ENCODE measurements at regions of chr9 and their contacts with region 1.

Region 1: DNA sequence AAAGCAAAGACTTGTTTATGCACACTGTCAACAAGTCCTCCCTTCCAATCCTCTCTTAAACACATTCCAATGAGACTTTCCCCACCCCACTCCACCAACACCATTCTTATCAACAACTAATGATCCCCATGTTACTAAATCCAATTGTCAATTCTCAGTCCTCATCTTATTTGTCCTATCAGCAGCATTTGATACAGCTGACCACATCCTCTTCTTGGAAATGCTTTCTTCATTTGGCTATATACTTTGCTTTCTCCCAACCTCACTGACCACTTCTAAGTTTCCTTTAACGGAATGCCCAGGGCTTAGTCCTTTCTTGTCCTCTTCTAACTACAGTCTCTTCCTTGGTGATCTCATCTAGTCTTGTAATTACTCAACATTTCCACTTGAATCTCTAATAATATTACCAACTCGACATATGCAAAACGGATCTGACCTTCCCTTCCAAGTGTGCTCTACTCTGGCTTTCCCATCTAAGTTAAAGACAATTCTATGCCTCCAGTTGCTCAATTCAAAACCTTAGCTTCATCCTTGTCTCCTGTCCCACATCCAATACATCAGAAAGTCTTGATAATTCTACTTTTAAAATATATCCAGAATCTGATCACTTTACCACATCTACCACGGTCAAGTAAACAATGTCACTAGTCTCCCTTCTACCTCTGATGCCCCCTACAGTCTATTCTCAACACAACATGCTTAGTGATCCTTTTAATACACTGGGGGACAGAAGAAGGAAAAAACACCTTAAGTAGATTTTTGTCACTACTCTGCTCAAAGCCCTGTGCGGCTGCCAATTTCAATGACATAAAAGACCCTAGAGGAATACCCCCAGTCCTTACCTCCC is 25.5 kb downstream of the AGTPBP1 start:
- DNase-seq: peak in 1 of 2 donors; percentile 36
- ATAC-seq: peak; percentile 30 to 61 (median 32)
- H3K4me3 ChIP-seq: no peak overlapping the region
- H3K4me3 Mint-ChIP-seq: peak overlapping the region; percentile 78
- H3K27ac ChIP-seq: peak overlapping the region; percentile 81
- H3K27ac Mint-ChIP-seq: peak overlapping the region; percentile 82 to 91
- H3K4me1 ChIP-seq: peaks cover 26% of the 10 kb centered on the region
- H3K4me1 Mint-ChIP-seq: peaks cover 72 to 75% of the 10 kb centered on the region in 2 donors
- H3K27me3 ChIP-seq: no peaks in the 10 kb centered on the region
- H3K27me3 Mint-ChIP-seq: no peaks in the 10 kb centered on the region
- CTCF ChIP-seq: peak; percentile 28

Region 2: GRCh38 chr9:85702726-85703289 is 13.4 kb before region 1 on chr9:
- intact Hi-C with region 1: loop called (anchors 2 kb)
- DNase-seq: no peak
- ATAC-seq: no peak
- H3K4me3 ChIP-seq: no peak overlapping the region
- H3K4me3 Mint-ChIP-seq: no peak overlapping the region
- H3K27ac ChIP-seq: no peak overlapping the region
- H3K27ac Mint-ChIP-seq: peak overlapping the region; percentile 9 to 30
- H3K4me1 ChIP-seq: peaks cover 3% of the 10 kb centered on the region
- H3K4me1 Mint-ChIP-seq: peaks cover 58 to 65% of the 10 kb centered on the region in 2 donors
- H3K27me3 ChIP-seq: no peaks in the 10 kb centered on the region
- H3K27me3 Mint-ChIP-seq: no peaks in the 10 kb centered on the region
- CTCF ChIP-seq: no peak

Region 3: DNA sequence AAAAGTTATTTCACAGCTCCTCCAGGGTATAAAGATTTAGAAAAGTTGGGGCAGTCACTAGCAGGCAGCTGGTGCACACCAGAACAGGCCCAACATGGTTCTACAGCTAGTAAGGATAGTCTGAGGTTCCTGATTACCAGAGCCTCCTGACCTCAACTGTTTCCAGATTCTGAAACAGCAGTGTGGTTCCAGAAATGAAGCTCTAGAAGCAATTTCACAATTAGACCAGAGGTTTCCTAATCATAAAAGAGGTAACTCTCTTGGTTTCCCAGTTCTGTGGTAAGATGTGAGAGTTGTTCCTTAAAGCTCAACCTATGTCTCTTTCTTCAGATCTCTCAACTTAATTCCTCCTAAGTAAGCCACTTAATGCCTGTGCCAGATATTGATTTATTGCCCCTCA is 13.6 kb after region 1 on chr9:
- intact Hi-C with region 1: loop called (anchors 1 kb)
- DNase-seq: no peak
- ATAC-seq: peak in 2 of 3 donors; percentile 37 to 53
- H3K4me3 ChIP-seq: no peak overlapping the region
- H3K4me3 Mint-ChIP-seq: no peak overlapping the region
- H3K27ac ChIP-seq: peak overlapping the region; percentile 4
- H3K27ac Mint-ChIP-seq: peak overlapping the region; percentile 58 to 78
- H3K4me1 ChIP-seq: peaks cover 25% of the 10 kb centered on the region
- H3K4me1 Mint-ChIP-seq: peaks cover 78 to 84% of the 10 kb centered on the region in 2 donors
- H3K27me3 ChIP-seq: no peaks in the 10 kb centered on the region
- H3K27me3 Mint-ChIP-seq: no peaks in the 10 kb centered on the region
- CTCF ChIP-seq: no peak

Region 4: DNA sequence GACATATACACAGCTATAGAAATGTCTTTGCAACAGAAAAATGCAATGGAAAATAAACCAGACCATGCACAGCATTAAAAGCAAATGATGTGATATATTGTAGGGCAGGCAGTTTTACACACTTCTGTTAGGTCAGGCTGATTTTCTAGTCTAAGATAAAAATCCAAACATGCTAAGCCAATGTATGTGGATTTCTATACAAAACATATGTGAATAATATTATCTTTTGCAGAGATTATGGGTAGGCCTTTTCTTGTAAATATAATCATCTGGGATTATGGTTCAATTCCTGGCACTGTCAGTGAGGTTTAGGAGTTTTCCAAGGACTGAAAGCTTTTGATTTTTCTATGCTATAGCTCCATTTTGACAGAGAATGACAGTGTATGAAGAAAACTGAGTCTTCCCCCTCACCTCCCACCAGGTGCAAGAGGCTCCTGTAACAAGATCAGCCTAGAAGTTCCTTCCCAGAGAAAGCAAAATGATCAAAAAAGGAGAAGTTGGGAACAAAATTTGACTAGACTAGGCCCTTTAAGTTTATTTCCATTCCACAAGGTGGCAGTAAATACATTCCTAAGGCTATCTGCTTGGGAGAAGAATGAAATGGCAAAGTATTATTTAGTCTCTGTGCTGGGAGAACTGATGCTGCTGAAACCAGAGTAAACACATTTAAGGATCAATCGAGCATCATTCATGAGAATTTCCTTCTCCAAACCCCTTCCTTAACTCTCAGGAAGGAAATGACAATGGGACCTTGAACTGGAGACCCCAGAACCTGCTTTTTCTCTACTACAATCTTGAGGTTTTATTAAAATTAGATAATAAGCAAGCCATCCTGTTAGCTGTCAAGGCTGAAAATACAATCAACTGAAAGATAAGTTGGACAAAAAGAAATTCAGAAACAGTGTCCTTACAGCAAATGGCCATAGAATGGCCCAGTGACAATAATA is 770.9 kb after region 1 on chr9:
- intact Hi-C with region 1: no loop called
- DNase-seq: peak in 1 of 2 donors; percentile 32
- ATAC-seq: no peak
- H3K4me3 ChIP-seq: no peak overlapping the region
- H3K4me3 Mint-ChIP-seq: no peak overlapping the region
- H3K27ac ChIP-seq: no peak overlapping the region
- H3K27ac Mint-ChIP-seq: no peak overlapping the region
- H3K4me1 ChIP-seq: no peaks in the 10 kb centered on the region
- H3K4me1 Mint-ChIP-seq: peaks cover 9 to 10% of the 10 kb centered on the region in 2 donors
- H3K27me3 ChIP-seq: no peaks in the 10 kb centered on the region
- H3K27me3 Mint-ChIP-seq: peaks cover 2 to 3% of the 10 kb centered on the region in 2 donors
- CTCF ChIP-seq: peak; percentile 40